Caco-2 (cell line): ENCODE measurements at regions of chr4 and their contacts with region 1.

Region 1: DNA sequence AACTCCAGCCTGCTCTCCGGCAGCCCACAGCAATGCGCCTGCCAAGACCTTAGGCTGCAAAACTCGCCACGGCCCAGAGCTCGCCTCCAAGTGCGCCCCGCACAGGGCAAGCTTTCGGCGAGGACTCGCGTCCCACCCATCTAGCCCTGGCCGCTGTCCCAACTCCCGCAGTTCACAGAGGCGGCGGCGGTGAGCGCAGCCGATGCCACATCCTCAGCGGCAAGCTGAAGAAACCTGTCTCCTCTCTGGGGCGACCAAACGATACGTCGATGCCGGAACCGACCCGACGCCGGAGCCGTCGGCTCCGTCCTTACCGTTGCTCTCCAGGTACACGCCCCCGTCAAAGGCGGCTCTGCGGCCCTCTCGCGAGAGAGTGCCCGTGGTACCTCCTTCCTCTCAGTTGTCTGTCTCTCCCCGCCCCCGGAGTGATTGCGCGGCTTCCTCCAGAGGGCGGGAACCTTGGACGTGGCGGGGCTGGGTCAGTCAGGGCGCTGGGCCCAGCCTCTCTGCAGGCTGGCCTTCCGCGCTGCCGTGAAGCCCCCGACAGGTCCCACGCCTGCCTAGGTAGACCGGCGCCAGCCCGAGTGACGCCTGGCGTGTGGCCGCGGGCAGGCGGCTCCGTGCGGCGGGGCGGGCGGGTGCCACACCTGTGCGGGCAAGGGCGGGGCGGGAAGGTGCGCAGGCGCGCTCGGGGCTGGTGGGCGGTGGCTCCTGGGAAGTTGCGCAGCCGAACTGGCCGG is 380 bp upstream of the RAB33B start:
- DNase-seq: peak; percentile 97 to 98
- H3K4me3 ChIP-seq: peak overlapping the region; percentile 92
- H3K4me3 Mint-ChIP-seq: peak overlapping the region; percentile 93
- H3K27ac Mint-ChIP-seq: peak overlapping the region; percentile 98
- H3K4me1 ChIP-seq: peaks cover 37% of the 10 kb centered on the region
- H3K4me1 Mint-ChIP-seq: peaks cover 40% of the 10 kb centered on the region
- H3K27me3 ChIP-seq: no peaks in the 10 kb centered on the region
- H3K27me3 Mint-ChIP-seq: no peaks in the 10 kb centered on the region
- CTCF ChIP-seq: no peak

Region 2: GRCh38 chr4:139015269-139015947 is 438.1 kb before region 1 on chr4 and contains the start of gene NOCT:
- CTCF ChIA-PET with region 1: no interaction called
- POLR2A ChIA-PET with region 1: interaction called, 3 read pairs
- intact Hi-C with region 1: loop called (anchors 5 kb)
- DNase-seq: peak; percentile 91 to 92
- H3K4me3 ChIP-seq: peak within 1 kb of the TSS; percentile 76
- H3K4me3 Mint-ChIP-seq: peak within 1 kb of the TSS; percentile 72
- H3K27ac Mint-ChIP-seq: peak within 1 kb of the TSS; percentile 83
- H3K4me1 ChIP-seq: peaks cover 37% of the 10 kb centered on the region
- H3K4me1 Mint-ChIP-seq: peaks cover 35% of the 10 kb centered on the region
- H3K27me3 ChIP-seq: no peaks in the 10 kb centered on the region
- H3K27me3 Mint-ChIP-seq: no peaks in the 10 kb centered on the region
- CTCF ChIP-seq: no peak
- total RNA-seq, gene NOCT: 21.5 and 25.4 TPM in 2 replicates

Region 3: GRCh38 chr4:139177868-139178611 is 275.5 kb before region 1 on chr4:
- CTCF ChIA-PET with region 1: no interaction called
- POLR2A ChIA-PET with region 1: interaction called, 3 read pairs
- intact Hi-C with region 1: loop called (anchors 2 kb)
- DNase-seq: peak; percentile 96 to 97
- H3K4me3 ChIP-seq: peak overlapping the region; percentile 84
- H3K4me3 Mint-ChIP-seq: peak overlapping the region; percentile 87
- H3K27ac Mint-ChIP-seq: peak overlapping the region; percentile 92
- H3K4me1 ChIP-seq: peaks cover 13% of the 10 kb centered on the region; the same call in 1 of the 2 replicates
- H3K4me1 Mint-ChIP-seq: peaks cover 6% of the 10 kb centered on the region
- H3K27me3 ChIP-seq: no peaks in the 10 kb centered on the region
- H3K27me3 Mint-ChIP-seq: no peaks in the 10 kb centered on the region
- CTCF ChIP-seq: no peak

Region 4: GRCh38 chr4:139501927-139502899 is 48.7 kb after region 1 on chr4:
- CTCF ChIA-PET with region 1: interaction called, 3 read pairs
- POLR2A ChIA-PET with region 1: no interaction called
- intact Hi-C with region 1: loop called (anchors 5 kb)
- DNase-seq: no peak
- H3K4me3 ChIP-seq: no peak overlapping the region
- H3K4me3 Mint-ChIP-seq: no peak overlapping the region
- H3K27ac Mint-ChIP-seq: no peak overlapping the region
- H3K4me1 ChIP-seq: no peaks in the 10 kb centered on the region
- H3K4me1 Mint-ChIP-seq: peaks cover 9% of the 10 kb centered on the region
- H3K27me3 ChIP-seq: no peaks in the 10 kb centered on the region
- H3K27me3 Mint-ChIP-seq: no peaks in the 10 kb centered on the region
- CTCF ChIP-seq: no peak

Region 5: DNA sequence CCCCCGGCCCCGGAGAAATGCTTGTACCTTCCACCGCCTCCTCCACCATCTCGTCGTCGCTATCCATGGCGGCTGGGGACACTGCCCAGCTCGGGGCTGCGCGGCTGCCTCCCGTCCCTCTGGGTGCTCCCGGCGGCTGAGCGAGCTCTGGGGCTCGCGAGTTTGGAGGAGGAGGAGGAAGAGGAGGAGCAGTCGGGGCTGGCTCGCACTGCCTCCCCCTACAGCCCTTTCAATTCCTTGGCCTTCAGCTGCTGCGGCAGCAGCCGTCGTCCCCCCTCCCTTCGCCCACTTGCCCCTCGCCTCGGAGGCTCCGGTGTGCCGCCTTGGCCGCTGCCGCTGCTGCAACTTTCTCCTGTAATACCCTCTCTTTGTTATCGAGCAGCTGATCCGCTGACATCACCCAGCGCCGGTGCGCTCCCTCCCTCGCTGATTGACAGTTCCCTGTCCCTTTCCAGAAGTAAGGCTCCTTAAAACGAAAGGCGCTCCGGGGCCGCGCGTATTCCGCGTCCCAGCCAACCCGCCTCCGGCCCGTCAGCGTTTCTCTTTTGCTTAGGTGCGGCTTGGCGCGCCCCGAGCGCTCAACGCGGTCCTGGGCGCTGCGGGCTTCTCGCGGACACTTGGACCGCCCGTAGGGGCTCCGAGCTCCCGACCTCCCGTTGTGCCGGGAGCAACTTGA is 102.7 kb after region 1 on chr4 and contains the start of gene SETD7:
- CTCF ChIA-PET with region 1: no interaction called
- POLR2A ChIA-PET with region 1: no interaction called
- intact Hi-C with region 1: loop called (anchors 1 kb)
- DNase-seq: peak; percentile 75 to 78
- H3K4me3 ChIP-seq: peak within 1 kb of the TSS; percentile 67
- H3K4me3 Mint-ChIP-seq: peak within 1 kb of the TSS; percentile 100
- H3K27ac Mint-ChIP-seq: peak within 1 kb of the TSS; percentile 98
- H3K4me1 ChIP-seq: peaks cover 9% of the 10 kb centered on the region
- H3K4me1 Mint-ChIP-seq: peaks cover 18% of the 10 kb centered on the region
- H3K27me3 ChIP-seq: no peaks in the 10 kb centered on the region; the same call in 1 of the 2 replicates
- H3K27me3 Mint-ChIP-seq: no peaks in the 10 kb centered on the region
- CTCF ChIP-seq: no peak
- total RNA-seq, gene SETD7: 29.4 and 32.2 TPM in 2 replicates

Region 6: DNA sequence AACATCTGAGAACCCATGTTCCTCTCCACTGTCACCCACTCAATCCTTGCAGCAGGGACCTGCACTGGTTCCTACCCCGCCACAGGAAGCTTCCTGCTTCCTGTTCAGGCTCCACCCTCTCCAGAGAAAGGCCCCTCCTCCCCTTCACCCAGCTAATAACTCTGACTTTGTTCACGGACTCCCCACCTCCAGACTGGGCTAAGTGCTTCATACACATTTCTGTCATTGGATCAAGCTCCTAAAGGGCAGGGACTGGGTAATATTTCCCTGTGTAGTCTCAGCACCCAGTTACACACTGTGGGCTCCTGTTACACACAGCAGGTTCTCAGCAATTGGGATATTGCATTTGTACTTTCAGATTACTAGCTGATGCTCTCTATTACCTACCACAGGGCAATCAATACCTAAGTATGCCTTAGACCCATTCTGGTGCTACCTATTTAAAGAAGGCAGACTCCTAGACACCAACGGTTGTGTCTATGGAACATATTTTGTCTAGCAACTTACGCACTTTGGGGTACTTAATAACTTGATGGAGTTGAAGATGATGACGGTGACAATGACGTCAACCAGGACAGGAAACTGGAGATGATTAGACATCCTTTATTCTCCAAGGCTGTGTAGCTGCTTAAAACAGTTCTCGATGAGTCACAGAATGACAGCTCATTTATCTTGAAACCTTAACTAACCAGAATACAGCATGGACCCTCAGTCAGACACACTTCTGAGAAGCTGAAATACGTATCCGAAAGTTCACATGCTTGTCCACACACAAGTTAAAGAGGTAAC is 642.3 kb after region 1 on chr4:
- CTCF ChIA-PET with region 1: no interaction called
- POLR2A ChIA-PET with region 1: no interaction called
- intact Hi-C with region 1: no loop called
- DNase-seq: no peak
- H3K4me3 ChIP-seq: no peak overlapping the region
- H3K4me3 Mint-ChIP-seq: peak overlapping the region; percentile 7
- H3K27ac Mint-ChIP-seq: peak overlapping the region; percentile 60
- H3K4me1 ChIP-seq: peaks cover 40% of the 10 kb centered on the region
- H3K4me1 Mint-ChIP-seq: peaks cover 73% of the 10 kb centered on the region
- H3K27me3 ChIP-seq: no peaks in the 10 kb centered on the region
- H3K27me3 Mint-ChIP-seq: no peaks in the 10 kb centered on the region
- CTCF ChIP-seq: no peak